Endothelial cell of umbilical vein (primary cell): ENCODE measurements at regions of chr10 and their contacts with region 1.

Region 1: GRCh38 chr10:64733980-64734379 is 1212.8 kb downstream of the REEP3 start:
- DNase-seq: peak; percentile 69
- H3K4me3 ChIP-seq: no peak overlapping the region
- H3K27ac ChIP-seq: no peak overlapping the region
- H3K4me1 ChIP-seq: no peaks in the 10 kb centered on the region
- H3K27me3 ChIP-seq: no peaks in the 10 kb centered on the region
- CTCF ChIP-seq: peak; percentile 41 to 54
- POLR2A ChIP-seq: no peak

Region 2: GRCh38 chr10:64041185-64041988 is 692.6 kb before region 1 on chr10:
- CTCF ChIA-PET with region 1: no interaction called
- POLR2A ChIA-PET with region 1: no interaction called
- dilution Hi-C with region 1: no loop called
- intact Hi-C with region 1: loop called (anchors 2 kb)
- DNase-seq: peak; percentile 67
- H3K4me3 ChIP-seq: peak overlapping the region in 1 of 3 experiments; percentile 30
- H3K27ac ChIP-seq: no peak overlapping the region
- H3K4me1 ChIP-seq: no peaks in the 10 kb centered on the region
- H3K27me3 ChIP-seq: no peaks in the 10 kb centered on the region
- CTCF ChIP-seq: peak; percentile 98 to 99
- POLR2A ChIP-seq: no peak

Region 3: GRCh38 chr10:64873959-64874358 is 140.0 kb after region 1 on chr10:
- CTCF ChIA-PET with region 1: no interaction called
- POLR2A ChIA-PET with region 1: no interaction called
- dilution Hi-C with region 1: no loop called
- intact Hi-C with region 1: loop called (anchors 10 kb)
- DNase-seq: peak; percentile 25
- H3K4me3 ChIP-seq: no peak overlapping the region
- H3K27ac ChIP-seq: peak overlapping the region; percentile 69
- H3K4me1 ChIP-seq: peaks cover 25% of the 10 kb centered on the region
- H3K27me3 ChIP-seq: no peaks in the 10 kb centered on the region
- CTCF ChIP-seq: no peak
- POLR2A ChIP-seq: no peak

Region 4: DNA sequence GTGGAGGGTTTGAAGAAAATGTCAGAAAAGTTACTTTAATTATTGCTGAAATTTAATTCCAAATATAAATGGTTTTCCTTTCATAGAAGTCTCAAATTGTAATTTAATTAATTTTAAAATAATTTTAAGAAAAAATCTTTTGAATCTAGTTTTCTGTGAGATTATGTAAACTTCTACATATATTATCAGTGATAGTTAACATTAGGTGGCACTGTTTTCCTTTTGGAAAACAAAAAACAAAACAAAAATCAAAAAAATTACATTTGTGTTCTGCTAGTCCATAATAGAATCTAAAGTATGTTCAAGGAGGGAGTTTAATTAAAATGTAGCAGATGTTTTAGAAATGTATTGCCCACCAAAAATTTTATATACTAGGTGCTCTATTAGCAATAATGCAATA is 243.9 kb after region 1 on chr10:
- CTCF ChIA-PET with region 1: interaction called, 3 read pairs
- POLR2A ChIA-PET with region 1: no interaction called
- dilution Hi-C with region 1: no loop called
- intact Hi-C with region 1: loop called (anchors 5 kb)
- DNase-seq: peak; percentile 20
- H3K4me3 ChIP-seq: no peak overlapping the region
- H3K27ac ChIP-seq: no peak overlapping the region
- H3K4me1 ChIP-seq: no peaks in the 10 kb centered on the region
- H3K27me3 ChIP-seq: no peaks in the 10 kb centered on the region
- CTCF ChIP-seq: no peak
- POLR2A ChIP-seq: no peak

Region 5: GRCh38 chr10:65348637-65349036 is 614.7 kb after region 1 on chr10:
- CTCF ChIA-PET with region 1: no interaction called
- POLR2A ChIA-PET with region 1: no interaction called
- dilution Hi-C with region 1: no loop called
- intact Hi-C with region 1: no loop called
- DNase-seq: no peak
- H3K4me3 ChIP-seq: no peak overlapping the region
- H3K27ac ChIP-seq: no peak overlapping the region
- H3K4me1 ChIP-seq: no peaks in the 10 kb centered on the region
- H3K27me3 ChIP-seq: no peaks in the 10 kb centered on the region
- CTCF ChIP-seq: no peak
- POLR2A ChIP-seq: no peak